Gastrocnemius medialis (tissue), 4 donors: ENCODE measurements at regions of chr7 and their contacts with region 1.

Region 1: GRCh38 chr7:129468087-129468486 is 33.9 kb downstream of the STRIP2 start:
- DNase-seq: no peak
- ATAC-seq: peak in 1 of 2 donors; percentile 37
- H3K4me3 ChIP-seq: no peak overlapping the region
- H3K27ac ChIP-seq: peak overlapping the region; percentile 6 to 77 (median 71)
- H3K4me1 ChIP-seq: peaks cover 38 to 40% of the 10 kb centered on the region in 2 donors
- H3K27me3 ChIP-seq: no peaks in the 10 kb centered on the region
- CTCF ChIP-seq: no peak
- POLR2A ChIP-seq: no peak

Region 2: DNA sequence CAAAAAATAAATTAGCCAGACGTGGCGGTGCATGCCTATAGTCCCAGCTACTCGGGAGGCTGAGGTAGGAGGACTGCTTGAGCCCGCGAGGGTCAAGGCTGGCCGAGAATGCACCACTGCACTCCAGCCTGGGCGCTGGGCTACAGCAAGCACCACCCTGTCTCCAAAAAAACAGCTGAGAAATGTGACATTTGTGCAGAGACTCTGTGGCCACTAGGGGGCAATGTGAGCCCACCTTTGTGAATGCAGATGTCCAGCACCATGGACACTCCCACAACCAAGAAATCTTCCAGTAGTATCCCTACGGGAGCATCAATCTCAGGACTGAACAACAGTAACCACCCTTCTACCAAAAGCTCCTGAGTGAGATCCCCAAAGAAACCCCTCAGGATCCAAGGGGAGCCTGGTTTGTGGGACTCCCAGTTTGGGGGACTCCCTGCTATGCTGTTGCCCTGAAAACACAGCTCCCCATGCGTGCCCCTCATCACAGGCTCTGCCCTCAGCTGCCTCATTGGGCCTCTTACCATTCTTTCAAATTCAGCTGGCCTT is 249.5 kb before region 1 on chr7:
- in situ Hi-C with region 1: loop called (anchors 5 to 25 kb)
- intact Hi-C with region 1: loop called (anchors 5 kb)
- DNase-seq: peak; percentile 66 to 76
- ATAC-seq: peak; percentile 91 to 96
- H3K4me3 ChIP-seq: no peak overlapping the region
- H3K27ac ChIP-seq: no peak overlapping the region
- H3K4me1 ChIP-seq: peaks cover 0 to under 1% of the 10 kb centered on the region in 2 donors
- H3K27me3 ChIP-seq: no peaks in the 10 kb centered on the region
- CTCF ChIP-seq: peak; percentile 84 to 93 (median 92)
- POLR2A ChIP-seq: no peak

Region 3: DNA sequence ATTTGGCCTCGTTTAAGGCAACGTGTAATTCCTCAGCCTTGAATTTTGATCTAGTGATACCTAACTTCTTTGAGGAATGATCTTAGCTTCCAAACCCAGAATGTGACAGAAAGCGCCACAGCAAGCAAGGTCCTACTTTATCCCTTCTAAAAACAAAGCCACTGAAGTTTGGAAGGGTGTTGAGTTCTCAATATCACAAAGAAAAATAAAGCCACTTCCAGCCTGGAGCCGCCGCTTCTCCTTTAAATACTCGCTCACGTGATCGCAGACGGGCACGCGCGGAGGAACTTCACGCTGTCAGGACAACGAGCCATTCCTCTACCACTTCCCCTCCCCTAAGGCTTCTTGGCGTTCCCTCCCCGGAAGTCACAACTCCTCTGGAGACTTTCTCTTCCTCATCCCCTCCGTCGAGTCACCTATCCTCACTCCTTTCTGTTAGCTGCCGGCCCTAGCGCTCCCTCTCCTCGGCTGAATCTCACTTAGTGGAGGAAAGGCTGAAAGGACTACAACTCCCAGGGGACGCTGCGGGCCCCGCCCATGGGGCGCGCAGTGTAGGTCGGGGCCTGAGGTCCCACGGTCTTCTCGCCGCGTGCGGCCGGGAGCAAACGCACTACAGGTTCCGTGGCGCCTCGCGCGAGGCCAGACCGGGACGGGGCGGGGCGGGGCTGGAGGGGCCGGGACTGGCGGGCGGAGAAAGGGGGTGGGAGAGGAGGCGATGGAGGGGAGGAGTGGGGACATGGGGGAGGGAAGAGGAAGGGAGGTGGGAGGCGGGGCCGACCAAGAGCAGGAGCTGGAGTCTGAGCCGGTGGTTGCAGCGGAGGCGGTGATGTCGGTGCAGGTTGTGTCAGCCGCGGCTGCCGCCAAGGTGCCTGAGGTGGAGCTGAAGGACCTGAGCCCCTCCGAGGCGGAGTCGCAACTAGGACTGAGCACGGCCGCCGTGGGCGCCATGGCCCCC is 243.6 kb before region 1 on chr7 and contains the start of gene AHCYL2:
- in situ Hi-C with region 1: loop called (anchors 5 to 25 kb)
- intact Hi-C with region 1: loop called (anchors 5 kb)
- DNase-seq: peak; percentile 97
- ATAC-seq: peak; percentile 89 to 90
- H3K4me3 ChIP-seq: peak within 1 kb of the TSS; percentile 67 to 82 (median 70)
- H3K27ac ChIP-seq: peak within 1 kb of the TSS; percentile 91 to 98 (median 94)
- H3K4me1 ChIP-seq: peaks cover 31 to 36% of the 10 kb centered on the region in 2 donors
- H3K27me3 ChIP-seq: no peaks in the 10 kb centered on the region
- CTCF ChIP-seq: no peak
- POLR2A ChIP-seq: peak; percentile 51 to 59
- total RNA-seq, gene AHCYL2: 22.7 to 41.0 (median 35.7) TPM

Region 4: DNA sequence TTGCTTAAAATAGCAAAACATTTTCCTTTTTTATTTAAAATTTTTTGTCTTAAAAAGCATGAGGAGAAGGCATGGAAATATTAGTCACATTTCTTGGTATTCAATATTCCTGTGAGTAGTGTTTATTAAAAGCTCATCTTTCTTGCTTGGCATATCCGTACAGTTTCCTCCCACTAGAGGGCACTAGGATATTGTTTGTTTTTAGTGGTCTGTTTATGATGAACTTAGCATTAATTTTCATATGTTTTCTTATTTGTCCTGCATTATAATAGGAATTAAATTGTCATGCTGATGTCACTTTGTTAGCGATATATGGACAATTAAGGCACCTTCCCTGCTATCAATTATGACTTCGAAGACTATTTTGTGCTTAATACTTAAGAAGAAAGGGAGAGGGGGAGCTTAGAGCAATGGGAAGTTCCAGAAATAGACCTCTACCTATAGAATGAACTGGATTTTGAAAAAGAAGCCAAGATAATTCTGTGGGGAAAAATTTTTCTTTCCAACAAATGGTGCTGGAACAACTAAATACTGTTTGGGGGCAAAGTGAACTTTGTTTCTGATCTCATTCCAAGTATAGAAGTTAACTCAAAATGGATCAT is 124.9 kb before region 1 on chr7:
- in situ Hi-C with region 1: no loop called
- intact Hi-C with region 1: loop called (anchors 2 kb)
- DNase-seq: peak in 1 of 2 donors; percentile 7
- ATAC-seq: peak; percentile 77 to 81
- H3K4me3 ChIP-seq: no peak overlapping the region
- H3K27ac ChIP-seq: peak overlapping the region; percentile 1 to 78 (median 52)
- H3K4me1 ChIP-seq: peaks cover 37 to 52% of the 10 kb centered on the region in 2 donors
- H3K27me3 ChIP-seq: no peaks in the 10 kb centered on the region
- CTCF ChIP-seq: peak; percentile 58 to 79 (median 65)
- POLR2A ChIP-seq: no peak

Region 5: DNA sequence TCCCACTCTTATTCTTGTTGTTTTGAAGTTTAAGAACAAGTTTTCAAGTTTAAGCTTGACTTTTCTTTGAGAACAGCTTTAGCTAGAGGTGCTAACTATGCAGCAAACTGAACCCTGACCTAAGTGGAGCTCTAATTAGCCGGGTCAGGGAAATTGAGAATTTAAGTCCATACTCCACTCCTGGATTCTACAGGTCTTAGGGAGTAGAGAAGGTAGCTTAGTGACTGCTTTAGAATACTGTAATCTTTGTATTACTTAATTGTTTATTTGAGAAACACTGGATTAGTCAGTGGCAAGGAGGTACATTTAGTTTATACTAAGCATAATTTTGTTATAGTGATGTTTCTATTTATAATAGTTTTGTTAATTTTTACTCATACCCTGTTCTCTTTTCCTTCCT is 108.4 kb before region 1 on chr7:
- in situ Hi-C with region 1: loop called in 2 of 4 experiments (anchors 5 to 10 kb)
- intact Hi-C with region 1: no loop called
- DNase-seq: no peak
- ATAC-seq: no peak
- H3K4me3 ChIP-seq: no peak overlapping the region
- H3K27ac ChIP-seq: no peak overlapping the region
- H3K4me1 ChIP-seq: no peaks in the 10 kb centered on the region
- H3K27me3 ChIP-seq: no peaks in the 10 kb centered on the region
- CTCF ChIP-seq: no peak
- POLR2A ChIP-seq: no peak

Region 6: DNA sequence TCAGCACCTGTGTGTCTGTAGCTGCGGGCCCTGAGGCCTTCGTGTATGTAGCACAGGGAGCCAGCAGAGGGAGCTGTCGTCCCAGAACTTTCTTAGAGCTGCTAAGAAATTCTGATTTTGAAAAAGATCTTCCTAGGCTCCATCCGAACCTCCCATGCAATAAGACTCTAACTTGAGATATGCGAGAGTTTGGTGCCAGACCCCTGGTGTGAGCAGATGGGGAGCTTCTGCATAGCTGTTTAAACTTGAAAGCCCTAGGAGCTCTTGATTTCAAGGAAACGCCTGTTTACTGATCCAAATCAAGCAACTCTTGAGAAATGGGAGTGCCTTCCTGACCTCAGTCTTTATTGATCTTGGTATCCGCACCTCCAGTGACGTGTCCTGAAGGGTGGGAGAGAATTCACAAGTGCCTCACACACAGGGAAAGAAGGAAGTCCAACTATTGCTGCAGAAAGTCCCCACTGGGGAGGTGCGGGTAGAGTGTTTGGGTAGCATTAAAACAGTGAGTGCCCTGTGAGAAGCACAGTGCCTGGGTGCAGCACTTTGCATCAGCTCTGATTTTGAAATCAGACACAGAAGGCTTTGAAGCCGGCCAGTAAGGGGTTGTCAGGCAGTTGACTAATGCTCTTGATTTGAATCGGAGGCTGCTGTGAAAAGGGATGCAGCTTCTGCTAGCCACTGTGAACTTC is 100.2 kb before region 1 on chr7:
- in situ Hi-C with region 1: loop called (anchors 5 to 10 kb)
- intact Hi-C with region 1: loop called (anchors 1 kb)
- DNase-seq: peak; percentile 53 to 74
- ATAC-seq: peak; percentile 86 to 94
- H3K4me3 ChIP-seq: no peak overlapping the region
- H3K27ac ChIP-seq: peak overlapping the region in 3 of 4 donors; percentile 28 to 47 (median 28)
- H3K4me1 ChIP-seq: peaks cover 12 to 17% of the 10 kb centered on the region in 2 donors
- H3K27me3 ChIP-seq: no peaks in the 10 kb centered on the region
- CTCF ChIP-seq: peak; percentile 77 to 92 (median 88)
- POLR2A ChIP-seq: no peak

Region 7: GRCh38 chr7:129401967-129402860 is 65.9 kb before region 1 on chr7:
- in situ Hi-C with region 1: no loop called
- intact Hi-C with region 1: loop called (anchors 1 kb)
- DNase-seq: no peak
- ATAC-seq: peak; percentile 65 to 82
- H3K4me3 ChIP-seq: no peak overlapping the region
- H3K27ac ChIP-seq: peak overlapping the region; percentile 50 to 76 (median 71)
- H3K4me1 ChIP-seq: peaks cover 15 to 38% of the 10 kb centered on the region in 2 donors
- H3K27me3 ChIP-seq: no peaks in the 10 kb centered on the region
- CTCF ChIP-seq: peak in 4 of 5 experiments; percentile 6 to 41 (median 25)
- POLR2A ChIP-seq: no peak